ENCODE measurements at regions of chr1 and their contacts with region 1.

Region 1: GRCh38 chr1:115348636-115349035 is 10.6 kb upstream of the NGF start:
- DNase-seq: no peak
- H3K4me3 ChIP-seq: no peak overlapping the region
- H3K27ac ChIP-seq: no peak overlapping the region
- H3K27me3 ChIP-seq: no peaks in the 10 kb centered on the region
- CTCF ChIP-seq: no peak

Region 2: GRCh38 chr1:115068826-115069572 is 279.6 kb before region 1 on chr1:
- CTCF ChIA-PET with region 1: no interaction called
- POLR2A ChIA-PET with region 1: no interaction called
- DNase-seq: no peak
- H3K4me3 ChIP-seq: no peak overlapping the region
- H3K27ac ChIP-seq: no peak overlapping the region
- H3K27me3 ChIP-seq: peaks cover 2% of the 10 kb centered on the region
- CTCF ChIP-seq: no peak

Region 3: GRCh38 chr1:115337633-115338456 is 10.8 kb before region 1 on chr1 and contains the start of gene NGF:
- CTCF ChIA-PET with region 1: interaction called, 3 read pairs
- POLR2A ChIA-PET with region 1: interaction called, 14 read pairs
- DNase-seq: peak; percentile 32
- H3K4me3 ChIP-seq: peak within 1 kb of the TSS; percentile 93
- H3K27ac ChIP-seq: peak within 1 kb of the TSS; percentile 11
- H3K27me3 ChIP-seq: no peaks in the 10 kb centered on the region
- CTCF ChIP-seq: peak; percentile 3; the same call in 1 of the 2 replicates
- polyA plus RNA-seq, gene NGF: 6.7 and 7.3 TPM in 2 replicates